ENCODE measurements at regions of chr9 and their contacts with region 1.

Region 1: GRCh38 chr9:73402081-73403028 is 250.7 kb downstream of the ANXA1 start:
- DNase-seq: no peak
- ATAC-seq: no peak
- H3K4me3 ChIP-seq: no peak overlapping the region
- H3K27ac ChIP-seq: no peak overlapping the region
- H3K4me1 ChIP-seq: no peaks in the 10 kb centered on the region
- H3K27me3 ChIP-seq: no peaks in the 10 kb centered on the region
- CTCF ChIP-seq: no peak
- POLR2A ChIP-seq: no peak

Region 2: GRCh38 chr9:73515216-73515615 is 112.9 kb after region 1 on chr9:
- in situ Hi-C with region 1: loop called in 1 of 4 experiments (anchors 25 kb)
- intact Hi-C with region 1: no loop called
- DNase-seq: no peak
- ATAC-seq: no peak
- H3K4me3 ChIP-seq: no peak overlapping the region
- H3K27ac ChIP-seq: no peak overlapping the region
- H3K4me1 ChIP-seq: no peaks in the 10 kb centered on the region
- H3K27me3 ChIP-seq: no peaks in the 10 kb centered on the region
- CTCF ChIP-seq: no peak
- POLR2A ChIP-seq: no peak

Measured in gastrocnemius medialis (tissue), 4 donors.